A673 (cell line): ENCODE measurements at regions of chr15 and their contacts with region 1.

Region 1: DNA sequence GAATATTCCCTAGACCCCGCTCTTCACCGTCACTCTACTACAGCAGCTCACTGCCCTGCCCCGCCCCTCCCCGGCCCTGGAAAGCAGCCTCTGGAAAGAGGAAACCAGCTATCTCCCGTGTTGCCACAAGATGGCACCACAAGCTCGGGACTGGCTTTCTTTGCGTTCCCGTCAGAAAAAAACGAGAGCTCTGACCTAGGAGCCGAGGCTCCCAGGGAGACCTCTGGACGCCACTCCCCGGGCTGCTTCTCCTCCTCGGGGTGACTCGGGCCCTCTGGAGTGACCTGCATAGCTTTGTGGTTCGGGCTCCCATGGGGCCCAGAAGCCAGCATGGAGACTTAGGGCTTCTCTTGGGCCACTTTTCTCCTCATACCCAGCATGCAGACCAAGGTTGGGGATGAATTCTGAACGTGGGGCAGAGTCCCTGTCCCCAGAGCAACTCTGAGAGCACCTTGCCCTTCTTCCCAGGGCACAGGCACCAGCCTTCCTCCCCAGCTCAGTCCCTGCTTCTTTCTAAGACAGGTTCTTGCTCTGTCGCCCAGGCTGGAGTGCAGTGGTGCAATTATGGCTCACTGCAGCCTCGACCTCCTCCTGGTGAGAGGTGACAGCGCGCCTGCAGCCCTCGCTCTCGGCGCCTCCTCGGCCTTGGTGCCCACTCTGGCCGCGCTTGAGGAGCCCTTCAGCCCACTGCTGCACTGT is 19.0 kb downstream of the STOML1 start:
- DNase-seq: peak; percentile 91
- H3K4me3 ChIP-seq: peak overlapping the region; percentile 24
- H3K27ac ChIP-seq: no peak overlapping the region
- H3K4me1 ChIP-seq: no peaks in the 10 kb centered on the region
- H3K27me3 ChIP-seq: no peaks in the 10 kb centered on the region
- CTCF ChIP-seq: peak; percentile 92

Region 2: GRCh38 chr15:73950831-73951561 is 22.1 kb before region 1 on chr15:
- CTCF ChIA-PET with region 1: interaction called, 12 read pairs
- POLR2A ChIA-PET with region 1: no interaction called
- intact Hi-C with region 1: no loop called
- DNase-seq: peak; percentile 97
- H3K4me3 ChIP-seq: no peak overlapping the region
- H3K27ac ChIP-seq: peak overlapping the region; percentile 75
- H3K4me1 ChIP-seq: peaks cover 23% of the 10 kb centered on the region
- H3K27me3 ChIP-seq: no peaks in the 10 kb centered on the region
- CTCF ChIP-seq: peak; percentile 85

Region 3: DNA sequence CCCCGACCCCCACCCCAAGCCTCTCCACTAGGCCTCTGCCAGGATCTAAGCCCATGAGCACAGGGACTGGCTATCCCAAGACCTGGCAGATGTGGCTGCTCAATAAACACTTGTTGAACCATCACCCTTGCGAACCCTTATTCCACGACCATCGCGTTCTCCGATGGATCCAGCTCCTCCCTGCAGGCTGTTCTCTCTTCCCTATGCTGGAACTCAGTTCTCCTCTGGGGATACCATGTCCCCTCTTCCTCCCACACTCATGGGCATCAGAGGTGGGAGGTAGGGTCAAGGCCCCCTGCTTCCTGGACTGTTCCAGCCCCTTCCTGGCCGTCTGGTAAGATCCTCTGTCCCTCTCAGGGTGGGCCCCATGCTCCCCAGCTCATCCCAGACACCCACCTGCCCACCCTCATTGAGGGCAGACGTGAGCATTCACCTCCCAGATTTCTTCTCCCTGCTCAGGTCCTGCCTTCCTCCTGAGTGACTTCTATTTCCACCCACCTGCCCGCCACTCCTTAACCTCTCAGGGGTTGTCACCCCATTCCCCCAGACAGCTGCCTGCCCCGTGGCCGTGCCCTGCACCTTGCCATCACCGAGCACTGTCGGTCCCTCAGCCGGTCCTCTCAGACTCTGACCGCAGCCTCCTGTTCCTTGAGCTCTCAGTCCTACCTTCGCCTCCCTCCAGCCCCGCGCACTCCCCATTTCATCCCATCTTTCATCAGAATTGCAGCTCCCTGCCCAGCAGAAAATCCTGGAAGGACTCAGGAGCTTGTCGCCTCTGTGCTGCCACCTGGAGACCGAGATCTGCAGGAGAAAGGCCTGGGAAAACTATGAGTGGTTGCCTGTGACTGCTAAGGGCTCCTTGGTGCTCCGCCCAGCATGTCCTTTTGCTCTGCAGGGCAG is 63.4 kb after region 1 on chr15:
- CTCF ChIA-PET with region 1: interaction called, 49 read pairs
- POLR2A ChIA-PET with region 1: no interaction called
- intact Hi-C with region 1: loop called (anchors 2 kb)
- DNase-seq: peak; percentile 66
- H3K4me3 ChIP-seq: no peak overlapping the region
- H3K27ac ChIP-seq: no peak overlapping the region
- H3K4me1 ChIP-seq: peaks cover 19% of the 10 kb centered on the region
- H3K27me3 ChIP-seq: no peaks in the 10 kb centered on the region
- CTCF ChIP-seq: peak; percentile 61

Region 4: DNA sequence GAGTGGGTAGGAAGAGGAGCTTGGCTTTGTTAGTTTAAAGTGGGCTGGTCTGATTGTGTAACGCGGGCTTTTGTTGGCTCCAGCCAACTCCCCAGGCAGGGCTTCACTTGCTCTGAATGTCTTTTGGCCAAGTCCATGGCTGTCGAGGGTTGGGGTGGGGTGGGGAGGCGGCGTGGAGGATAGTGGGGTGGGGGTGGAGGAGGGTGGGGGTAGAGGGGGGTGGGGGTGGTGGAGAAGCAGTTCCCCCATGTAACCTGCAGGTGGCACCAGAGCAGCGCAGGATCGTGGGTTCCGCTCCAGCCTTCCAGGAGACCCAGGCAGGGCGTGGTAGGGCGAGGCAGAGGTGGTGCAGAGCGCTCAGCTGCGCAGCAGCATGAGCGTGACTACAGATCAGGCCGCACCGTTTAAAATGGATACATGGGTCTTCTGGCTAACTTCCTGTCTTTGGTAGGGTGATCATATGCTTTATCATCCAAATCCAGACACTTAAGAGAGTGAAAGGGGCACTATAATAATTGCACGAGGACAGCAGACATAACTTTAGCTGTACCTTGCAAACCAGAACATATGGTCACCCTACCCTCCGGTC is 80.9 kb after region 1 on chr15:
- CTCF ChIA-PET with region 1: interaction called, 18 read pairs
- POLR2A ChIA-PET with region 1: no interaction called
- intact Hi-C with region 1: no loop called
- DNase-seq: peak; percentile 84
- H3K4me3 ChIP-seq: peak overlapping the region; percentile 17
- H3K27ac ChIP-seq: no peak overlapping the region
- H3K4me1 ChIP-seq: no peaks in the 10 kb centered on the region
- H3K27me3 ChIP-seq: no peaks in the 10 kb centered on the region
- CTCF ChIP-seq: peak; percentile 56

Region 5: DNA sequence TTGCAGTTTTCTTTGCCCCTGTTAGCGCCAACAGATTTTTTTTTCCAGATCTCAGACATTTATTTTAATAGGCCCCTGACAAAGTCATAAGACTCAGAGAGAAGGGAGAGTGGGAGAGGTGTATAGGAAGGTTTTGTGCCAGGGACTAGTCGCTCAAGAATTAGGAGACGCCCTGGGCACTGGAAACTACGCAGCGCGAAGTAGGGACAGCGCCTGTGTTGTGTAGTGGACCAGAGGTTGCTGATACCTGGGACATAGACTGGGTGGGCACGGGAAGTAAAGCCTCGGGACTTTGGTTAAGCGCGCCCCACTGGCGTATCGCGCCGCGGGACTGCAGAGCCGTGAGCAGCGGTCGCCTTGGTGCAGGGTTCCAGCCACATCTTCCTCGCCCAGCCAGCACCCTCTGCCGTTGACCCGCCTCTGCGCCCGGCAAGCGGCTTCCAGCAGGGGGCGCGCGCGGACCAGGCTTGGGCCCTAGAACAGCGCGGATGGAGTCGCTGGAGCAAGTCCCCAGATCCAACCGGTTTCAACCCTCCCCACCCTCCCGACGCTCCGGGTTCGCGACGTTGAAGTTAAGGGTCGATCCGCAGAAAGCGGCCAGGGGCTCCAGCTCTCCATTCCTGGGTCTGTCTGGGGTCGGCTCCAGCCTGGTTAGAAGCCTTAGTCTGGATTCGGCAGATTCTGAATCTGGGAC is 154.3 kb after region 1 on chr15:
- CTCF ChIA-PET with region 1: interaction called, 8 read pairs
- POLR2A ChIA-PET with region 1: no interaction called
- intact Hi-C with region 1: loop called (anchors 5 kb)
- DNase-seq: peak; percentile 94
- H3K4me3 ChIP-seq: peak overlapping the region; percentile 42
- H3K27ac ChIP-seq: no peak overlapping the region
- H3K4me1 ChIP-seq: peaks cover 22% of the 10 kb centered on the region
- H3K27me3 ChIP-seq: peaks cover 44% of the 10 kb centered on the region
- CTCF ChIP-seq: peak; percentile 98

Region 6: DNA sequence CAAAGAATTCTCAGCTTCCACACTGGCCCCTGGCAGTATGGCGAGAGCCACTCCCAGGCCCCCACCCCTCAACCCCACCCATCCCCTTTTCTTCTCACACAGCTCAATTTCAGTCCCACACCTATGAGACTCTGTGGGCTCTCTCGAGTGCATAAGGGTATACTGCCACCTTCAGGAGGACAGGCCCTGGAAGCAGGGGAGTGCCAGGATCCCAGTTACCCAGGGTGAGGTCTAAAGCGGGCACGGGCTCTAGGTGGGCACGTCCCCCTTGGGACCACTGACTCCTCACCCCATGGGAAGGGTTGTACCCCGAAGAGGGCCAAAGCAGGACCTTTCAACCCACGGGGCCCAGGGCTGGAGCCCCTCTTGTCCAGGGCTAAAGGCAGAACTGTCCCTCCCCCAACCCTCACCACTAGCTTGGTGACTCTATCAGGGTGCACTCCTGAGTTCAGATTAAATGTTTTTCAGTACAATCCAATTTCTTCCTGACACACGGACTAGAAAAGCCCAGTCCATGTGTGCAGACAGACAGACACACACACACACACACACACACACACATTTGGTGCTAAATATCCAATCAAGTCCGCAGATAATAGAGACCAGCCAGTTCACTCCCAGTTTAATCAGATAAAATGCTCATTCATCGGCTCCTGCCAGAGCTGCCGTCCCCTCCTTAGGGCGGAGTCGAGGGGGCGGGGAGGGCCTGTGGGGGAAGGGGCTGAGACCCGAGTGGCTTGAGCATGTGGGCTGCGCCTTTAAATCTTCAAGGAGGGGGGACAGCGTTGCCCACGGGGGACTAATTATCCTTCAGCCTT is 334.9 kb after region 1 on chr15:
- CTCF ChIA-PET with region 1: interaction called, 13 read pairs
- POLR2A ChIA-PET with region 1: interaction called, 3 read pairs
- intact Hi-C with region 1: no loop called
- DNase-seq: peak; percentile 86
- H3K4me3 ChIP-seq: no peak overlapping the region
- H3K27ac ChIP-seq: no peak overlapping the region
- H3K4me1 ChIP-seq: peaks cover 28% of the 10 kb centered on the region
- H3K27me3 ChIP-seq: no peaks in the 10 kb centered on the region
- CTCF ChIP-seq: peak; percentile 85

Region 7: DNA sequence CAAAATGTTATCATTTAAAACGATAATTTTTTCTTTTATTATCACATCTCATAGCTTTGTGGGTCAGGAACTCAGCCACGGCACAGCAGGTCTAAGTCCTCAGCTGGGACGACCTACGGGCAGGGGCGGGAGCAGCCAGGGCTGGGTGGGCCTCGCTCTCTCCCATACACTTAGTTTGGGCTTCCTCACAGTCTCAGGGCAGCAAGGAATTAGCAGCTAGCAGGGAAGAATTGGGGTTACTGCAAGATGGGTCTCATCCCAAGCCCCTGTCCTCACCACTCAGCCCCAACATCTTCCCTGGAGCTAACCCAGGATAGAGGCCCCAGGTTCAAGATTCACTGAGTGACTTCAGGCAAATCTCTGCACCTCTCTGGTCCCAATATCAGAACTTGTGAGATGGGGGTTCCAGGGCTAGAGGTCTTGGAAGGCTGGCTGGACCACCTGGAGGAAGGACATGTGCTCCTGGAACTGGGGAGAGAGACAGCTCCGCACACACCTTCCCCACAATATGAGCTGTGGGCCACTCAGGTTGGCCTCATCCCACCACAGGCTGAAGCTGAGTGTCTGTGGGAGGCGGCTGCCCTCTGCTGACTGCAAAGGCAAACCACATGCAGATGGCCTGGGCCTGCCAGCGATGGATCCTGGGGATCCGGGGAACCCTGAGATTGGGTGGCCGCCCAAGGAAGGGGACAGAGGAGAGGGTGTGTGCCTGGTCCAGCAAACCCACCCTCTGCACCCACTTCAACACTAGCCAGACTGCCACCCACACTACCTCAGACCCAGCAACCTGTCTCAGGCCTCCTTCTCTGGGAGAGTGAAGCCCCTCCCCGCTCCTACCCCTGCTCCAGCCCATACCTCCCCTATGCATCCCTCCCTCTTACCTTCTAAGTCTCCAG is 349.3 kb after region 1 on chr15:
- CTCF ChIA-PET with region 1: interaction called, 15 read pairs
- POLR2A ChIA-PET with region 1: no interaction called
- intact Hi-C with region 1: loop called (anchors 2 kb)
- DNase-seq: peak; percentile 76
- H3K4me3 ChIP-seq: no peak overlapping the region
- H3K27ac ChIP-seq: no peak overlapping the region
- H3K4me1 ChIP-seq: peaks cover 29% of the 10 kb centered on the region
- H3K27me3 ChIP-seq: no peaks in the 10 kb centered on the region
- CTCF ChIP-seq: peak; percentile 92